ENCODE measurements at regions of chr2 and their contacts with region 1.

Region 1: DNA sequence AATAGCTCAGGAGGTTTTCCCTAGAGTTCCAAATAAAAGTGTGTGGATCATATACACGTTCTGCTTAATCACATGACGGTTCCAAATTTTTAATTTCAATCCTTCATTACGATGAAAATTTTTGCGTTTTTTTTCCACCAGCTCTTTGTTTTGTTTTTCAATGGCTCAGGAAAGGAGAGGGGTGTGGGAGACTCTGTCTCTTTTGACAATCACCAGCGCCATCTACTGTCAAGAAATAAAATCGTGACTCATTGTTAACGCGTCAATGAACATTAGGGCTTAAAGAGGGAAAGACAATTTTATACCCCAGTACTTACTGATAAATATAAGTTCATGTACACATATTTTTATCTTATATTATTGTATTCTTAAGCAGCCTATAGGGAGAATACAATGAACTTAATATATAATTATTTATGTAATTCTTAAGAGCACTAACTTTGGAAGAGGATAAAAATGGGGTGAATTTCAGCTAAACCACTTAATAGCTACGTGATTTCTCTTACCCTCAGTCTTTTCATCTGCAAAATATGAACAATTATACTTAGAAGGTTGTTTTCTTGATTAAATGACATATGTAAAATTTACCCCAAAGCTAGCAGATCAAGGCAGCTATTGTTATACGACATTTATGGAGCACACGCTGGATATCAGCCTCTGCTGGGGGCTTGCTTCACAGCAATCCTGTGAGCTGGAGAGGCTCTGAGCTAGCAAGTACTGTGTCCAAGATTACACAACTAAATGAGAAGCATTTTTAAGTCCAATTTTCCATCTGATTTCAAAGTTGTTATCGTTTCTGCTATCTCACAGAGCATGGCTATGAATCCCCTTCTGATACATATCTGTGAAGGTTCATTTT is 47.4 kb upstream of the RMDN2 start:
- DNase-seq: peak; percentile 55
- H3K4me3 Mint-ChIP-seq: no peak overlapping the region
- H3K27ac Mint-ChIP-seq: no peak overlapping the region
- H3K4me1 Mint-ChIP-seq: peaks cover 7% of the 10 kb centered on the region
- H3K27me3 Mint-ChIP-seq: peaks cover 15% of the 10 kb centered on the region

Region 2: DNA sequence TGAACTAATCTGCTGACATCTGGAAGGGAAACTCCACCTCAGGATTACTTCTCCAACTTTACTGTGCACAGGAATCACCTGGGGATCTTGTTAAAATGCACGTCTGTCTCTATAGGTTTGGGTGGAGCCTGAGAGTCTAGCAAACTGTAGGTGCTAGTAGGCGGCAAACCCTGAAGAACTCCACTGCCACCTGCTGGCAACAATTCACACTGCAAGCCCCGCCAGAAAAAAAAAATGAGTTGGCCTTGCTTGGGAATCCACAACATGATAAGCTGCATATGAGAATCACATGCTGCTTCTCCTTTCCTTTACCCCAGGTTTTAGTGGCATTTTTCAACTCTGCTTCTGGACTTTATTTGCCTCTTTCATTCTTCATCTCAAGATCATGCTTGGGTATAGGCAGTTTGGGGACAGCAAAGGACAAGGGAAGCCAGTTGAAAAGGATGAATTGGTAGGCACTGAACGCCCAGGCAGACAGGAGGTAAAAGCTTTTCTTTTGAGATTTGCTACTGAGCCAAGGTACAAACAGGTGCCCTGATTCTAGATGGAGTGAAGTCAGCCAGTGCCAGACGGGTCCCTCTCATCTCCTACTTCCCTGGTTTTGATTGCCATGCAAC is 1092.4 kb before region 1 on chr2:
- CTCF ChIA-PET with region 1: no interaction called
- intact Hi-C with region 1: loop called (anchors 2 kb)
- DNase-seq: peak; percentile 80
- H3K4me3 Mint-ChIP-seq: no peak overlapping the region
- H3K27ac Mint-ChIP-seq: no peak overlapping the region
- H3K4me1 Mint-ChIP-seq: no peaks in the 10 kb centered on the region
- H3K27me3 Mint-ChIP-seq: no peaks in the 10 kb centered on the region

Region 3: DNA sequence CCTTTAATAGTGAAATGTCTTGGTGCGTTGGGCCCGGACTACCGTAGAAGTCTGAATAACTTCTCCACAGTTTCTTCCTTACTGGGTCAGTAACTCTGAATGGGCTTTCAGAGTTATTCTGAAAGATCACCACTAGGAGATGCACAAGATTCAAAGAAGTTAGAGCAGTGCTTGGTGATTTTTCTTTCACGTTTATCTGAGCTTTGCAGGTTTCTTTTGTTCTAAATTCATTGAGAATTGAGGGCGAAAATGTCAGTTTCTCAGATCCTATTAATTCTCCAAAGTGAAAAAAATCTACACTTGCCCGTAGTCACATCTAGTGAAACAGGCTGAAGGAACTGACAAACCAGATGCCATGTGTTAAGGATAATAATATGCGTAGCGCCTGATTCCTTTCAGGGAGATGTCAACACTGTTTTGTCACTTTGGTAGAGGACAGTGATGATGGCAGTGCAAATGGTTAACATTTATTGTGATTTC is 463.2 kb before region 1 on chr2:
- CTCF ChIA-PET with region 1: interaction called, 79 read pairs
- intact Hi-C with region 1: loop called (anchors 1 kb)
- DNase-seq: no peak
- H3K4me3 Mint-ChIP-seq: no peak overlapping the region
- H3K27ac Mint-ChIP-seq: no peak overlapping the region
- H3K4me1 Mint-ChIP-seq: peaks cover 3% of the 10 kb centered on the region
- H3K27me3 Mint-ChIP-seq: no peaks in the 10 kb centered on the region

Region 4: DNA sequence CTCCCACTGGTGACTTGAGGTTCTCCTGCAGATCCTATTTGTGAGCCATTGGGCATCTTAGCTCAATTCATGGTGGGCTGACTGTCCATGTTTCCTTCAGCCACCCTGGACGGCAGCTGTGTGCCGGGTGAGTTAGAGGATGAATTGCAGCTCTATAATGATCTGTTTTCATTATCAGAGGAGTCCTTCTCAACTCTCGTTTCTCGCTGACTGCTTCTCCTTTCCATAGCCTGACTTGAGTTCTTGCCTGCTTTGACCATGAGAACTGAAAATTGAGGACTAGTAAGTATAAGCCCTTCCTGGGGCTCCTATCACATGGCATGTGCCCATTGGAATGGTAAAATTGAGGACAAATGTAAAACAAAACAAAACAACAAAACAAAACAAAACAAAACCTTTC is 328.1 kb before region 1 on chr2:
- CTCF ChIA-PET with region 1: interaction called, 5 read pairs
- intact Hi-C with region 1: loop called (anchors 2 kb)
- DNase-seq: no peak
- H3K4me3 Mint-ChIP-seq: no peak overlapping the region
- H3K27ac Mint-ChIP-seq: no peak overlapping the region
- H3K4me1 Mint-ChIP-seq: peaks cover 4% of the 10 kb centered on the region
- H3K27me3 Mint-ChIP-seq: no peaks in the 10 kb centered on the region

Region 5: GRCh38 chr2:37832590-37833197 is 45.0 kb before region 1 on chr2:
- CTCF ChIA-PET with region 1: interaction called, 58 read pairs
- intact Hi-C with region 1: loop called (anchors 1 kb)
- DNase-seq: peak; percentile 92
- H3K4me3 Mint-ChIP-seq: no peak overlapping the region
- H3K27ac Mint-ChIP-seq: no peak overlapping the region
- H3K4me1 Mint-ChIP-seq: peaks cover 13% of the 10 kb centered on the region
- H3K27me3 Mint-ChIP-seq: no peaks in the 10 kb centered on the region

Region 6: GRCh38 chr2:37851828-37852584 is 25.7 kb before region 1 on chr2:
- CTCF ChIA-PET with region 1: interaction called, 29 read pairs
- intact Hi-C with region 1: loop called (anchors 1 kb)
- DNase-seq: no peak
- H3K4me3 Mint-ChIP-seq: peak overlapping the region; percentile 17
- H3K27ac Mint-ChIP-seq: peak overlapping the region; percentile 81
- H3K4me1 Mint-ChIP-seq: peaks cover 26% of the 10 kb centered on the region
- H3K27me3 Mint-ChIP-seq: peaks cover 6% of the 10 kb centered on the region

Region 7: GRCh38 chr2:37925063-37925897 is 47.6 kb after region 1 on chr2 and contains the start of gene RMDN2:
- CTCF ChIA-PET with region 1: no interaction called
- intact Hi-C with region 1: loop called (anchors 2 kb)
- DNase-seq: peak; percentile 83
- H3K4me3 Mint-ChIP-seq: peak within 1 kb of the TSS; percentile 81
- H3K27ac Mint-ChIP-seq: peak within 1 kb of the TSS; percentile 68
- H3K4me1 Mint-ChIP-seq: peaks cover 8% of the 10 kb centered on the region
- H3K27me3 Mint-ChIP-seq: no peaks in the 10 kb centered on the region
- total RNA-seq, gene RMDN2: 0.79 to 1.2 TPM

Region 8: DNA sequence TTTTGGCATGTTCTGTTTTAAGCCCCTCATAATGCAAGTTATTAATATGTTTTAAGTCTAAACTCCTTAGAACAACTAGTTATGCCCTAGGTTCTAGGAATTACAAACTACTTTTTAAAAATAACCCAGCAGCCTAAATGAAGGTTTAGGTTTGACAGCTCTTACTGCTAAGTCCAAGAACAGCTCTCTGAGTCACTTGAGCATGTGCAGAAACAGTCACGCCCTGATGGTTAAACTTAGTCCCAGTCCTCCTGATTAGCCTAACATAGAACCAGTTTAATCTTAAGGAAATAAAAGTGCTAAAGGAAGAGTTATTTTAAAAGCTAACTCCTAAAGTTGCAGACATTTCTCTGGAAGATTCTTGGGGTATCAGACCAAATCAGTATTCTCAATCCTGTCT is 119.9 kb after region 1 on chr2:
- CTCF ChIA-PET with region 1: no interaction called
- intact Hi-C with region 1: no loop called
- DNase-seq: no peak
- H3K4me3 Mint-ChIP-seq: no peak overlapping the region
- H3K27ac Mint-ChIP-seq: no peak overlapping the region
- H3K4me1 Mint-ChIP-seq: no peaks in the 10 kb centered on the region
- H3K27me3 Mint-ChIP-seq: no peaks in the 10 kb centered on the region

Measured in activated naive CD4-positive, alpha-beta T cell treated with anti-CD3 and anti-CD28 coated beads for 36 hours (primary cell).